ENCODE measurements at regions of chr14 and their contacts with region 1.

Region 1: DNA sequence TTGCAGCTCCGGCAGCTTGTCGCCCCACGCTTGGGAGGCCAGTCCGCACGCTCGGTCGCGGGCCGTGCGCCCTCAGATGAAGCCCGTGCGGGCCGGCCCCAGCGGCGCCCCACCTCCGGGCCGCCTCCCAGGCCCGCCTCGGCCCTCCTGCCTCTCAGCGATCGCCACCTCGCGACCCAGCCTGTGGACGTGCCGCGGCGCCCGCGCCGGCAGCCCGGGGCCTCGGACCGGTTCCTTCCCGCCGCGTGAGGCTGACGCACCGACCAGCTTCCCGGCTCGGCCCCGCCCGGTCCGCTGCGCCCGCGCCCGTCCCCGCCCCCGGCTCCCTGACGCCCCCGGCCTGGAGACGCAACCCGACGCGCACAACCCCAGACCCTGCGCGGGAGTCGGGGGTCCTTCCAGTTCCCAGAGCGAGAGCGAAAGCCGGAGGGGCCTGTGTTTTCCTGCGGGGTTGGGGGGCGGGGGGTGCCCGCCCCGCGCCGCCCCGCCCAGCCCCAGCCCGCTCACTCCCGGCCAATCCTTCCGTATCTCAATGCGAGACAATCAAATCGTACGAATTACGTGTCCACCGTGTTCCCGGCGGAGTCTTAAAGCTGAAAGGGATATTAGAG is at the start of gene ERO1A:
- DNase-seq: peak; percentile 76
- H3K4me3 ChIP-seq: peak within 1 kb of the TSS; percentile 67 to 77
- H3K27ac ChIP-seq: peak within 1 kb of the TSS; percentile 96 to 97
- H3K4me1 ChIP-seq: peaks cover 7% of the 10 kb centered on the region
- H3K27me3 ChIP-seq: no peaks in the 10 kb centered on the region
- CTCF ChIP-seq: no peak
- POLR2A ChIP-seq: peak; percentile 78
- total RNA-seq, gene ERO1A: 18.5 to 35.8 TPM

Region 2: DNA sequence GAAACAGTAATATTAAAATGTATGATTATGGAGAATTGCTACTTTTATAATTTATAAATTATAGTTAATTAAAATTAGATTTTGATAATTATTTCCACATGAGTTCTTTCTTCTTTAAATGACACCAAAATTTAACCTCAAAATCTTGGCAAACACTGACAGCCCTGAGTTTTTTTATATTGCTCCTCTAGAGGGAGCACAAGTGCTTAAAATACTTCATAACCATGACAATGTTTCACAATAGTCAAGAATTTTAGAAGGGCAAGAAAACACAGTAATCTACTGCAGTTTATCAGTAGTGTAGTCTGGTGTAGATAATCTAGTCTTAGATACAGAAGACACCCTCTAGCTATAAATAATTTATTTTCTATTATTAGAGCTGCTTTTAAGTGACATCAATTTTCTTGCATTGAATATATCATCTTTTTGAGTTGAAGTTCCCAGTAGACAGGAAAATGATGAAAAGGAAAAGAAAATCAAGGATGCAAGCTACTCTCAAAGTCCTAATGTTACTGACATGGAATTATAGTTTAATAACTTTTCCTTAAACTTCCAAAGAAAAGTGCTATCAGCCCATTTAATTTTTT is 395.8 kb before region 1 on chr14:
- intact Hi-C with region 1: loop called (anchors 10 kb)
- DNase-seq: no peak
- H3K4me3 ChIP-seq: no peak overlapping the region
- H3K27ac ChIP-seq: no peak overlapping the region
- H3K4me1 ChIP-seq: no peaks in the 10 kb centered on the region
- H3K27me3 ChIP-seq: no peaks in the 10 kb centered on the region
- CTCF ChIP-seq: peak; percentile 43 to 83 (median 68)
- POLR2A ChIP-seq: no peak

Region 3: DNA sequence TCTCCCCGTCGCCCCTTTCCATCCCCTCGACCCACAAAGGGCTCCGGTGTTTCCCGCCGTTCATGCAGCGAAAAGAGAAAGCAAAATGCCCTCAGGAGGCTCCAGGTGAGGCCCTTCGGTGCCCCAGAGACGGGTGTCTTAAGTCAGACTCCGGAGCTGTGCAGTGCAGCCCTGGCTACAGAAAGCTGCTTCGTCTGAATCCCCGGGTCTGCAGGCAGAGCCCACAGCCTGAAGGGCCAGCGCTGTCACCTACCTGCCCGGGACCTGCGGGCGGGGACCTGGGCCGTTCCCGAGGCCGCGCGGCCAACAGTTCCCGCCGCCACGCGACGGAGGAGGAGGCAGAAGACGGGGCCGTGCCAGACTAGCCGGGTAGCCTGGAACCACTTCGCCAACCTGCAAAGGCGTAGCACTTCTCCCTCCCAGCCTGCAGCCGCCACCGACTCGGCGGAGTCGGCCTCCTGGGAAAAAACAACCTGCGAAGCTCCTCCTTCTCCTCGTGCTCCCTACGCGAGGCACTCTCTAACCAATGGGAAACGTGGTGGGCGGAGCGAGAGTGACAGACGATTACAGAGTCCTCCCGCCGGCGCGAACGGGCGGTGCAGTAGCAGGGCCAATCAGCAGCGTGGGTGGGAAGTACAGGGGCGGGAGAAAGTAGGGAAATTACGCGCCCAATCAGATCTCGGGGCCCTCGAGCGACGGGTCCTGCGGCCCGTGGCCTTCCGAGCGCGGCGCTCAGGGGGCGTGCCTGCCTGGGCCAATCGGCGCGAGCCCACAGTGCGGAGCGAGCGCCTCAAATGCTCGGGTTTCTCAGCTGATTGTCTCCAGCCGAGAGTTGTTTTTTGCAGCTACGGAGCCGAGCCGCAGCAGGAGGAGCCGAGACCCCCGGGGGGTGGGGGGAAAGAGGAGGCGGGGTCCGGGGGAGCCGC is 143.3 kb before region 1 on chr14 and contains the starts of genes GPR137C and TXNDC16:
- intact Hi-C with region 1: loop called (anchors 10 kb)
- DNase-seq: peak; percentile 100
- H3K4me3 ChIP-seq: peak within 1 kb of the TSS; percentile 61 to 80
- H3K27ac ChIP-seq: peak within 1 kb of the TSS; percentile 95 to 96
- H3K4me1 ChIP-seq: no peaks in the 10 kb centered on the region
- H3K27me3 ChIP-seq: no peaks in the 10 kb centered on the region
- CTCF ChIP-seq: peak in 1 of 4 experiments; percentile 46
- POLR2A ChIP-seq: peak; percentile 99
- total RNA-seq, gene GPR137C: 0.09 to 5.3 TPM
- total RNA-seq, gene TXNDC16: 14.0 to 37.1 TPM